Right cardiac atrium (tissue), 5 donors: ENCODE measurements at regions of chr3 and their contacts with region 1.

Region 1: GRCh38 chr3:94069194-94069813 is 6.4 kb downstream of the NSUN3 start:
- DNase-seq: no peak
- ATAC-seq: no peak
- H3K4me3 ChIP-seq: no peak overlapping the region
- H3K27ac ChIP-seq: no peak overlapping the region
- H3K4me1 ChIP-seq: no peaks in the 10 kb centered on the region
- H3K27me3 ChIP-seq: no peaks in the 10 kb centered on the region

Region 2: GRCh38 chr3:94009608-94010007 is 59.7 kb before region 1 on chr3:
- intact Hi-C with region 1: loop called in 3 of 4 experiments (anchors 5 to 10 kb)
- DNase-seq: no peak
- ATAC-seq: no peak
- H3K4me3 ChIP-seq: no peak overlapping the region
- H3K27ac ChIP-seq: no peak overlapping the region
- H3K4me1 ChIP-seq: no peaks in the 10 kb centered on the region
- H3K27me3 ChIP-seq: no peaks in the 10 kb centered on the region

Region 3: GRCh38 chr3:94162700-94163099 is 93.4 kb after region 1 on chr3:
- intact Hi-C with region 1: no loop called
- DNase-seq: no peak
- ATAC-seq: no peak
- H3K4me3 ChIP-seq: no peak overlapping the region
- H3K27ac ChIP-seq: no peak overlapping the region
- H3K4me1 ChIP-seq: no peaks in the 10 kb centered on the region
- H3K27me3 ChIP-seq: no peaks in the 10 kb centered on the region